Left cardiac atrium (tissue), 4 donors: ENCODE measurements at regions of chr4 and their contacts with region 1.

Region 1: GRCh38 chr4:16196478-16197393 is 29.5 kb downstream of the TAPT1 start:
- DNase-seq: no peak
- ATAC-seq: peak; percentile 88 to 90

Region 2: DNA sequence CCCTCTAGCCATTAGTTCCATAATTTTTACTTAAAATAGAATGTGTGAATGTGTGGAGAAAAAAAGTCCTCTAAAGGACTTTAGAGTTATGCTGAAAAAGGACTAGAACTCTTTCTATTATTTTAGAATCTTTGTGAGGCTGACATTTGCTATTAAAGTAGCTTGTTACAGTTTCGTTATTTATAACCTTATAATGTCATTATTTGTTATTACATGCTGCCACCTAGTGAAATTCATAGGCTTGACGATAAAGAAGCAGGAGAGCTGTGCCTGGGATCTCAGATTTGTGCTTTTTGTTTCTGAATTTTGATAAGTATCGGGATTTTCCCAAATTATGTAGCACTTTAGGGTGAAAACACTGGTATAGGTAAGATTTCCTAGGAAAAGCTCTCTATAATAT is 68.1 kb after region 1 on chr4:
- intact Hi-C with region 1: loop called in 1 of 2 experiments (anchors 5 kb)
- DNase-seq: no peak
- ATAC-seq: peak; percentile 67 to 75